H1 (cell line): ENCODE measurements at regions of chr6 and their contacts with region 1.

Region 1: DNA sequence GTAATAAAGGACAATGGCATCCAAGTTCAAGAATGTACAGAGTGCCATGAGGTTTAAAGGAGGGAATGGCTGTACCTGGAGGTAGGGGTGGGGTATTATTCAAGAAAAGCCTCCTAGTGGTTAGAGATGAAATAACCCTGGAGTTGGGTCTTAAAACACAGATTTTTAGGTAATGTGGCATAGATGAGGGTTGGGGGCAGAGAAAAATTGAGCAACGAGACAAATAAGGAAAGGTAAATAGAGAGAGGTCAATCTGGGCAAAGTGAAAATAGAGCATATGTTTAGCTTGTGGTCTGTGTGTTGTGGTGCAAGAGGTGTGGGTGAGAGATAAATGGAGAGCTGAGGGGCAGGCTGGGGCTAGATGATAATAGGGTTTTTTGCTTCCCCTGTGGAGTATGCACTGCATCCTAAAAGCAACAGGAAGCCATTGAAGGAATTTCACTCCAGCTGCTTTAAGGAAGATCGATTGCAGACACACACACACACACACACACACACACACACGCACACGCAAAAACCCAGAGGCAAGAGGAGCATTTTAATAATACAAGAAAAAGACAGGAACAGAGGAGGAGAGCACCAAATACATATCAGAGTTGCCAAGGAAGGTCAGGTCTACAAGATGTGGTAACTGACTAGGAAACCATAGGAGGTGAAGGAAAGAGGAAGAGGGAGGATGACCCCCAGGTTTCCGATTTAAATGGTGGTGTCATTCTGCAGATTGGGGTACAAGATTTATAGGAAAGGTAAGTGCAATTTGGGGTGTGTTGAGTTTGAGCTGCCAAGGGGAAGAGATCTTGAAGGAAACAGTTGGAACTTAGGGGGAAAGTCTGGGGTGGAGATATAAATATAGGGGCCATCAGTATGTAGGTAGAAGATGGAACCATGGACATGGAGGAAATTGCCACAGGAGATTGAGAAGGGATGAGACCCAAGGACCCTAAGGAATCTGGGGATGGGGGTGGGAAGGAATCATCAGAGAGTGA is 31.3 kb upstream of the ADGRF1 start:
- DNase-seq: no peak
- H3K4me3 ChIP-seq: no peak overlapping the region
- H3K27ac ChIP-seq: no peak overlapping the region
- H3K4me1 ChIP-seq: peaks cover 0 to 3% (median 0%) of the 10 kb centered on the region in 4 experiments; a peak in 1 of 7 replicates
- H3K27me3 ChIP-seq: no peaks in the 10 kb centered on the region
- CTCF ChIP-seq: peak in 2 of 3 experiments; percentile 38 to 52; a peak in 2 of 4 replicates
- EP300 ChIP-seq: no peak
- POLR2A ChIP-seq: no peak
- RAD21 ChIP-seq: peak in 1 of 2 experiments; percentile 39; a peak in 2 of 4 replicates

Region 2: DNA sequence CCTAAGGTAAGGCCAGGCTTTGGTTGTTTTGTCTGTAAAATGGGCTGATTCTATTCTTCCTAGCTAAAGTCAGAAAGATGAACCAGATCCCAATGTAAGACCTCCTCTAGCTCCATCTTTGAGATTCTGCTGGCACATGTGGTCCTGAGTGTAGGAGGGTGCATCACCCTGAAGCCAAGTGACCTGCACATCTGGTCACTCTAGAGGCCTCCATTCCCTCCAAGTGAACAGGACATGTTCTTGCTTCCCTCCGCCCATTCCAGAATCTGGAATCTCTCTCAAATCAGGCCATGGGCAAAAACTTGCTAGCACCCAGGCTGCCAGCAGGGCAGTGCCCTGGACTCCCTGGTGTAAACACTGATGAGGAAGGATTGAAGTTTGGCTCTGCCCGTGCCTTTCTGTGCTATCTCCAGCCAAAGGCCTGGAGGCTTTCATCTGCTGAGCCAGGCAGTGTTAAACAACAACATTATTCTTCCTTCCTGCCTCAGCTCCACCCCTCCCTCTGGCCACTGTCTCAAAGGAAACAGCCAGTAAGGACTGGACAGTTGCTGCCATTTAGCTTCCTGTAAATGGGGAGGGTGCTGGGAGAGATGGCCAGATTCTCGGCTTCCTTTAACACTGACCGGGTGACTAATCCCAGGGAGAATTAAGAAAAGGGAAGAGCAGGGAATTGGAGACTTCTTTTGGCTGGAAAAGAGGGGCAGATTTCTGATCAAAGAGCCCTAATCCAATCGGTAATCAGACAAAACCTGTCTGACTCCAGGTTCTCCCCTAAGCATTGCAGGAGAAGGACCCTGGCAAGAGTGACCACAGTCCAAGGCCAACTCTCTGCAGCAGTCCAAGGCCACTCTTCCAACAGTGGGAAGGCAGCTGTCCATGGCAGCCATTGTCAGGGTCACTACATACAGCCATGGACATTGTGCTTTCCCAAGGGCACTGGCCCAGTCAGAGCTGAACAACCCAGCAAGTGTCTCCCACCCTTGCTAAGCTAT is 11.8 kb before region 1 on chr6:
- CTCF ChIA-PET with region 1: interaction called, 18 read pairs
- POLR2A ChIA-PET with region 1: no interaction called
- DNase-seq: no peak
- H3K4me3 ChIP-seq: no peak overlapping the region
- H3K27ac ChIP-seq: no peak overlapping the region
- H3K4me1 ChIP-seq: no peaks in the 10 kb centered on the region
- H3K27me3 ChIP-seq: no peaks in the 10 kb centered on the region
- CTCF ChIP-seq: no peak
- EP300 ChIP-seq: no peak
- POLR2A ChIP-seq: no peak
- RAD21 ChIP-seq: no peak

Region 3: GRCh38 chr6:47083586-47084047 is 10.2 kb after region 1 on chr6:
- CTCF ChIA-PET with region 1: interaction called, 11 read pairs
- POLR2A ChIA-PET with region 1: no interaction called
- DNase-seq: no peak
- H3K4me3 ChIP-seq: no peak overlapping the region
- H3K27ac ChIP-seq: no peak overlapping the region
- H3K4me1 ChIP-seq: peaks cover 0 to 2% (median 0%) of the 10 kb centered on the region in 4 experiments; a peak in 1 of 7 replicates
- H3K27me3 ChIP-seq: no peaks in the 10 kb centered on the region
- CTCF ChIP-seq: no peak
- EP300 ChIP-seq: no peak
- POLR2A ChIP-seq: no peak
- RAD21 ChIP-seq: no peak

Region 4: GRCh38 chr6:47091886-47092668 is 18.7 kb after region 1 on chr6:
- CTCF ChIA-PET with region 1: interaction called, 11 read pairs
- POLR2A ChIA-PET with region 1: interaction called, 3 read pairs
- DNase-seq: no peak
- H3K4me3 ChIP-seq: no peak overlapping the region
- H3K27ac ChIP-seq: no peak overlapping the region
- H3K4me1 ChIP-seq: peaks cover 0 to 6% (median 0%) of the 10 kb centered on the region in 4 experiments; a peak in 2 of 7 replicates
- H3K27me3 ChIP-seq: no peaks in the 10 kb centered on the region
- CTCF ChIP-seq: no peak
- EP300 ChIP-seq: no peak
- POLR2A ChIP-seq: no peak
- RAD21 ChIP-seq: no peak